Activated B cell treated with CpG ODN at 0.5 μM for 24 hours (primary cell): ENCODE measurements at regions of chr12 and their contacts with region 1.

Region 1: GRCh38 chr12:62522984-62523383 is 56.4 kb downstream of the MON2 start:
- DNase-seq: no peak
- ATAC-seq: no peak
- H3K4me3 Mint-ChIP-seq: no peak overlapping the region
- H3K27ac Mint-ChIP-seq: no peak overlapping the region
- H3K4me1 Mint-ChIP-seq: no peaks in the 10 kb centered on the region
- H3K27me3 Mint-ChIP-seq: no peaks in the 10 kb centered on the region
- CTCF ChIP-seq: no peak

Region 2: GRCh38 chr12:62400135-62400534 is 122.8 kb before region 1 on chr12:
- CTCF ChIA-PET with region 1: no interaction called
- POLR2A ChIA-PET with region 1: no interaction called
- intact Hi-C with region 1: no loop called
- DNase-seq: no peak
- ATAC-seq: no peak
- H3K4me3 Mint-ChIP-seq: no peak overlapping the region
- H3K27ac Mint-ChIP-seq: no peak overlapping the region
- H3K4me1 Mint-ChIP-seq: peaks cover 21% of the 10 kb centered on the region
- H3K27me3 Mint-ChIP-seq: no peaks in the 10 kb centered on the region
- CTCF ChIP-seq: no peak

Region 3: DNA sequence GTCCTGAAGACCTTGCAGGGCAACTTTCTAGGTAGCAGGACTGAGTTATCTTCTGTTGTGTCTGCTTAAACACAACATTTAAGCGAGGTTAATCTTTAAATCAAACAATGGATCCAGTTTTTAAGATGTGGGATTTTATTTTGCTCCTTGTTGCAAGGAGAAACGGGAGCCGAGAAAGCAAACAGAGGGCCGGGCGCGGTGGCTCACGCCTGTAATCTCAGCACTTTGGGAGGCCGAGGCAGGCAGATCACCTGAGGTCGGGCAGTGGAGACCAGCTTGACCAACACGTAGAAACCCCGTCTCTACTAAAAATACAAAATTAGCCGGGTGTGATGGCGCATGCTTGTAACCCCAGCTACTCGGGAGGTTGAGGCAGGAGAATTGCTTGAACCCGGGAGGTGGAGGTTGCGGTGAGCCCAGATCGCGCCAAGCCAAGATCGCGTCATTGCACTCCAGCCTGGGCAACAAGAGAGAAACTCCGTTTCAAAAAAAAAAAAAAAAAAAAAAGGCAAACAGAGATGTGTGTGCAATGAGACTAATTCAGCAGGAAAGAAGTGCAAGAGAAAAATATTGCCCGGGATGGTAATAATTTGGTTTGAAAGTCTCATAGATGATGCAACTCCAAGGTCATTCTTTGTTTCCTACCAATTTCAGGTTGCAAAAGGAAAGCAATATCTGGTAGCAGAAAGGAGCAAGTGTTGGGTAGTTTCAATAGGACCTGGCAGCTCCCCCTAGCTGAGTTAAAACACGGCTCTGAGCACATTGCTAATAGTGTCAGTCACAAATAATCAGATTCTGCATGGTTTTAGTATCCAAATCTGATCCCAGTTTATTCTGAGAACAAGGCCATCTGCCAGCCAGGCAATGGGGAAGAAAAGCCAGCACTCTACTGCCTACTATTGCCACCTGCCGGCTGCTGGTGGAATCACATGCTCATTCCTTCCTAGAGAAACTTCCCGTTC is 270.6 kb after region 1 on chr12:
- CTCF ChIA-PET with region 1: interaction called, 5 read pairs
- POLR2A ChIA-PET with region 1: no interaction called
- intact Hi-C with region 1: loop called (anchors 1 kb)
- DNase-seq: peak; percentile 67
- ATAC-seq: peak; percentile 82
- H3K4me3 Mint-ChIP-seq: no peak overlapping the region
- H3K27ac Mint-ChIP-seq: no peak overlapping the region
- H3K4me1 Mint-ChIP-seq: no peaks in the 10 kb centered on the region
- H3K27me3 Mint-ChIP-seq: no peaks in the 10 kb centered on the region
- CTCF ChIP-seq: peak; percentile 93